ENCODE measurements at regions of chr19 and their contacts with region 1.

Region 1: GRCh38 chr19:6125571-6125989 is 9.9 kb upstream of the ACSBG2 start:
- DNase-seq: peak; percentile 25 to 78 (median 70)
- ATAC-seq: peak; percentile 89
- H3K4me3 ChIP-seq: no peak overlapping the region
- H3K4me3 Mint-ChIP-seq: no peak overlapping the region
- H3K27ac ChIP-seq: no peak overlapping the region
- H3K27ac Mint-ChIP-seq: peak overlapping the region in 1 of 9 donors; percentile 28
- H3K4me1 ChIP-seq: no peaks in the 10 kb centered on the region
- H3K4me1 Mint-ChIP-seq: peaks cover 0 to 7% (median 0%) of the 10 kb centered on the region in 7 donors
- H3K27me3 ChIP-seq: no peaks in the 10 kb centered on the region
- H3K27me3 Mint-ChIP-seq: no peaks in the 10 kb centered on the region

Region 2: DNA sequence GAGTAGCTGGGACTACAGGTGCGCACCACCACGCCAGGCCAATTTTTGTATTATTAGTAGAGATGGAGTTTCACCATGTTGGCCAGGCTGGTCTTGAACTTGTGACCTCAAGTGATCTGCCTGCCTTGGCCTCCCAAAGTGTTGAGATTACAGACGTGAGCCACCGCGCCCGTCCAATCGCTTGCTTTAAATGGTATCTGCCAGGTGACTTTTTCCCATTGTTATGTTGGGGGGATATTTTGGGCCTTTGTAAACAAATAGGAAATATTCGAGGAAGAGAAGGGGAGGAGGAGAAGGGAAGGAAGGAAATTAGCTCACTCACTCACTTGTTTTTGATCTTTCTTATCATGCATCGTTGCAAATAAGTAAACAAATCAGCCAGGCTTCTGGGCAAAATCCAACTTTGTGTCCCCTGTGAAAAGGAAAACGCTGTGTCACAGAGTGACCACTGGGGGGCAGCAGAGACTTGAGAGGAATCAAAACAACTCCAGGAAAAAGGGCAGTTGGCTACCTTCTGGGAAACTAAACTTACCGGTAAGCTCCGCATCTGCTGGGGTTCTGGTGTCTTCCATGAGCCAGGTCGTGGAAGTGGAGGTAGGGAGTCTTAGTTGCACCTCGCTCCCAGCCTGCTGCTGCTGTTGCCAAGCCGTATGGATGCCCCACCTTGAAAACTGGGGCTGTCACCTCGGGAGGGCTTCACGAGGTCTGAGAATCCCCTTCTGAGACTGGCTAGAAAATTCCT is 138.3 kb before region 1 on chr19:
- CTCF ChIA-PET with region 1: no interaction called
- POLR2A ChIA-PET with region 1: no interaction called
- intact Hi-C with region 1: loop called (anchors 1 to 5 kb)
- DNase-seq: peak; percentile 52 to 71 (median 64)
- ATAC-seq: peak; percentile 85
- H3K4me3 ChIP-seq: peak overlapping the region; percentile 69
- H3K4me3 Mint-ChIP-seq: peak overlapping the region; percentile 61 to 82 (median 76)
- H3K27ac ChIP-seq: peak overlapping the region; percentile 32
- H3K27ac Mint-ChIP-seq: peak overlapping the region in 6 of 9 donors; percentile 1 to 66 (median 33)
- H3K4me1 ChIP-seq: peaks cover 0 to 5% of the 10 kb centered on the region in 2 donors
- H3K4me1 Mint-ChIP-seq: peaks cover 8 to 47% (median 18%) of the 10 kb centered on the region in 7 donors
- H3K27me3 ChIP-seq: no peaks in the 10 kb centered on the region
- H3K27me3 Mint-ChIP-seq: no peaks in the 10 kb centered on the region

Region 3: DNA sequence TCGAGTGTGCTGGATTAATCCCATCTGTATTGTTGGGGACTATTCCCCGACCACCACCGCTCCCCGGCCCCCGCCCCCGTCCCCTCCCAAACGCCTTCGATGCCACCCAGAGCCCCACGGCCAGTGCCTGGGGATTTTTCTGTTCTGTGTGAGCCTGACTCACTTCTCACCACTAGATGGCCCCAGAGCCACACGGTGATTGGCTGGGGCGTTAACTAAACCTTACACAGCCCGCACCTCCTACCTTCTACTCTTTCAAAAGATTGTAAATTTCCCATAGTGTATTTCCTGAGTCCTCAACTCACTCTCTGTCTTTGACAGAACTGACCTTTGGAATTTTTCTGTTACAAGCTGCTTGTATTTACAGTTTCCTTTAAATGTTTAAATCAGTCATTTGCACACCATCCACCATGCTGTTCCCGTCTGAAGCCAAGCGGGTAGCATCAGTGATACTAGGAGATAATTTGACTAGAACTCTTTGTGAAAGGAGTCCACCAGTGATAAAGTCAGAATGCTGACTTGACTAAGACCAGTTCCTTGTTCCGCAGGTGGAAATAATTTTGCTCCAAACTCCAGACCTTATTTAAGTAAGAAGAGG is 76.7 kb before region 1 on chr19:
- CTCF ChIA-PET with region 1: interaction called, 83 read pairs
- POLR2A ChIA-PET with region 1: no interaction called
- intact Hi-C with region 1: loop called (anchors 1 kb)
- DNase-seq: peak; percentile 56 to 81 (median 74)
- ATAC-seq: peak; percentile 100
- H3K4me3 ChIP-seq: no peak overlapping the region
- H3K4me3 Mint-ChIP-seq: no peak overlapping the region
- H3K27ac ChIP-seq: no peak overlapping the region
- H3K27ac Mint-ChIP-seq: no peak overlapping the region
- H3K4me1 ChIP-seq: no peaks in the 10 kb centered on the region
- H3K4me1 Mint-ChIP-seq: peaks cover 0 to 5% (median 4%) of the 10 kb centered on the region in 7 donors
- H3K27me3 ChIP-seq: no peaks in the 10 kb centered on the region
- H3K27me3 Mint-ChIP-seq: peaks cover 0 to 11% (median 0%) of the 10 kb centered on the region in 5 donors

Region 4: GRCh38 chr19:6073858-6074708 is 51.5 kb before region 1 on chr19:
- CTCF ChIA-PET with region 1: interaction called, 5 read pairs
- POLR2A ChIA-PET with region 1: no interaction called
- intact Hi-C with region 1: loop called in 1 of 2 experiments (anchors 1 kb)
- DNase-seq: no peak
- ATAC-seq: no peak
- H3K4me3 ChIP-seq: no peak overlapping the region
- H3K4me3 Mint-ChIP-seq: no peak overlapping the region
- H3K27ac ChIP-seq: no peak overlapping the region
- H3K27ac Mint-ChIP-seq: peak overlapping the region in 1 of 9 donors; percentile 28
- H3K4me1 ChIP-seq: no peaks in the 10 kb centered on the region
- H3K4me1 Mint-ChIP-seq: peaks cover 0 to 15% (median 6%) of the 10 kb centered on the region in 7 donors
- H3K27me3 ChIP-seq: no peaks in the 10 kb centered on the region
- H3K27me3 Mint-ChIP-seq: no peaks in the 10 kb centered on the region

Region 5: GRCh38 chr19:6087074-6087571 is 38.5 kb before region 1 on chr19:
- CTCF ChIA-PET with region 1: no interaction called
- POLR2A ChIA-PET with region 1: interaction called, 4 read pairs
- intact Hi-C with region 1: loop called in 1 of 2 experiments (anchors 5 kb)
- DNase-seq: peak in 3 of 9 donors; percentile 24 to 37 (median 25)
- ATAC-seq: peak; percentile 54
- H3K4me3 ChIP-seq: peak overlapping the region; percentile 24
- H3K4me3 Mint-ChIP-seq: peak overlapping the region; percentile 71 to 96 (median 82)
- H3K27ac ChIP-seq: peak overlapping the region; percentile 62
- H3K27ac Mint-ChIP-seq: peak overlapping the region; percentile 64 to 94 (median 85)
- H3K4me1 ChIP-seq: peaks cover 10 to 19% of the 10 kb centered on the region in 2 donors
- H3K4me1 Mint-ChIP-seq: peaks cover 18 to 28% (median 21%) of the 10 kb centered on the region in 7 donors
- H3K27me3 ChIP-seq: no peaks in the 10 kb centered on the region
- H3K27me3 Mint-ChIP-seq: peaks cover 0 to 2% (median 0%) of the 10 kb centered on the region in 5 donors

Region 6: DNA sequence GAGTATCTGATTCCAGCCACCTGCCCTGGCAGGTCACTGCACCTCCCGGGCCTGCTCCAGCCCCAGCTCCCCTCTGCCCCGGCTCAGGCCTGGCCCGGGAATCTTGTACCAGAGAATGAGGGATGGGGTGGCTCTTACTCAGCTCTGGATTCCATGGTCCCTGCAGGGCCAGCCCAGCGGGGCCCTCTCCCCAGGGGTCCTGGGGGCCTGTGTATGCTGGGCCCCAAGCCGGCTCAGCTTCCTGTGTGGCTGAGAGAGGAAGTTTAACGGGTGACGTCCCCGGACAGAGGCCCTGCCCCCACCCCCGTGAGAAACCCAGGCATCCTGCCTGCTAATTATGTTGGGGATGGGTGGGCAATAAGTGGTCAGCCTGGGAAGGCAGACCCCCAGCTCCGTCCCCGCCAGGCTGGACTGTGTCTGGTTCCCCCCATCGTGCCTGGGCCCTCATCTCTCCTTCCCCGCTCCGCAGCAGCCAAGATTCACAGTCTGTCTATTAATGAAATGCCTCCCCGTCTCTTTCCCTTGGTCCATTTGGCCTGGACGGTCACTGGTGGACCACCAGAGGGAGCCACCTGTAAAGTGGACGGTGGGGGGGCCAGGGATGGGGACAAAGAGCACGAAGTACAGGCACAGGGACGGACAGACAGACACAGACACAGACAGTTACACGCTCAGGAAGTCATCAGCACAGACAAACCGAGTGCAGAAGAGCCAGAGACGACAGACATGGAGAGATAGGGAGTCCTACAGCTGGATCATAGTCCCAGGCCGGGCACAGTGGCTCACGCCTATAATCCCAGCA is 356.2 kb after region 1 on chr19 and contains the start of gene DENND1C:
- CTCF ChIA-PET with region 1: no interaction called
- POLR2A ChIA-PET with region 1: no interaction called
- intact Hi-C with region 1: no loop called
- DNase-seq: peak; percentile 52 to 67 (median 67)
- ATAC-seq: peak; percentile 91
- H3K4me3 ChIP-seq: peak within 1 kb of the TSS; percentile 95
- H3K4me3 Mint-ChIP-seq: peak within 1 kb of the TSS; percentile 88 to 100 (median 96)
- H3K27ac ChIP-seq: peak within 1 kb of the TSS; percentile 94
- H3K27ac Mint-ChIP-seq: peak within 1 kb of the TSS; percentile 93 to 99 (median 96)
- H3K4me1 ChIP-seq: peaks cover 26 to 27% of the 10 kb centered on the region in 2 donors
- H3K4me1 Mint-ChIP-seq: peaks cover 30 to 46% (median 40%) of the 10 kb centered on the region in 7 donors
- H3K27me3 ChIP-seq: no peaks in the 10 kb centered on the region
- H3K27me3 Mint-ChIP-seq: no peaks in the 10 kb centered on the region
- total RNA-seq, gene DENND1C: 106 to 142 (median 118) TPM